SK-N-SH (cell line): ENCODE measurements at regions of chr9 and their contacts with region 1.

Region 1: GRCh38 chr9:86434039-86434726 is 80.0 kb upstream of the TUT7 start:
- DNase-seq: peak; percentile 56
- H3K4me3 ChIP-seq: no peak overlapping the region; a peak in 1 of 4 replicates
- H3K27ac ChIP-seq: no peak overlapping the region
- H3K4me1 ChIP-seq: no peaks in the 10 kb centered on the region
- H3K27me3 ChIP-seq: no peaks in the 10 kb centered on the region
- CTCF ChIP-seq: peak; percentile 92
- EP300 ChIP-seq: no peak
- RAD21 ChIP-seq: peak; percentile 91

Region 2: DNA sequence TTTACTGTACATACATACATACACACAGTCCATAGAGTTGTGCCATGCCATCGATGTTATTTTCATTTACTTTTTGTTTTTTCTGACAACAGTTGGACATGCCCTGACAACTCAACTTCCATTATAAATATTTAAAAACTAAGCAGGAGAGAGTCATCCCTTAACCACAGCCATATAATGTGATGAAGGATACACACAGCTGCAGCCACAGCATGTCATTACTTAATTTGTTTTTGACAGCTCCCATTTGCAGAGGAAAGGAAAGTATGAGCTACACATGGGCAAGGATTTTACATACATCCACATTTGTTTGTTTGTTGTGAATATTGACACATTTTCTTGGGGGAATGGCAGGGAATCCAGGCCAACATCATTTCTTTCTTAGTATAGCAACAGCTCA is 11.5 kb after region 1 on chr9:
- CTCF ChIA-PET with region 1: interaction called, 11 read pairs
- POLR2A ChIA-PET with region 1: no interaction called
- DNase-seq: no peak
- H3K4me3 ChIP-seq: no peak overlapping the region
- H3K27ac ChIP-seq: no peak overlapping the region
- H3K4me1 ChIP-seq: no peaks in the 10 kb centered on the region
- H3K27me3 ChIP-seq: no peaks in the 10 kb centered on the region
- CTCF ChIP-seq: no peak
- EP300 ChIP-seq: no peak
- RAD21 ChIP-seq: no peak

Region 3: DNA sequence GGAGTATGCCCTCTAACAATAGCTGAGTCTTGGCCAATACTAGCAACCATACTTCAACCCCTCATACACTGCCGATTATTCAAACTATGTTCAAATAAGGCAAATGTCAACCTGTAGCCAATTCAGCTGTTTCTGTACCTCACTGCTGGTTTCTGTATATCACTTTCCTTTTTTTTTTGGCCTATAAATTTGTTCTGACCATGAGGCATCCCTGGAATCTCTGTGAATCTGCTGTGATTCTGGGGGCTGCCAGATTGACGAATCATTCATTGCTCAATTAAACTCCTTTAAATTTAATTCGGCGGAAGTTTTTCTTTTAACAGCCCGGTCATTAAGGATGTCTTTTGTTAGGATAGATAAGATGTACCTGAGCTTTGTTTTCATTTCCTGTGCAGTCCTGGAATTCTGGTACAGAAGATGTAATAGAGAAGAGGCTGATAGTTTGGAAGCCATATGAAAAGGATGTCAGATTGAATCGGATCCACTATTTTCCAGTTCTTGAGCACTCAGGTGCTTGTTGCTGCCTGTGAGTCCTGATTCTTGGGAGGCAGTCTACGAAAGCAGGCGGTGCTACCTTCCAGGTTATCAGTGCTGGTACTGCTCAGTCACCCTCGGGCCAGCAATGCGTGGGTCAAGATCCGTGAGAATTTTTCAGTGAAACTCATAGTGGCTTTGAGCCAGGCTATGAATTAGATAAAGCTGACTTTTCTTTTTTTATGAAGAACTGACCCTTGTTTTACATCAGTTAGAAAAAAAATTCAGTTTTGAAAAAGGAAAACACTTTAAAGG is 26.2 kb after region 1 on chr9:
- CTCF ChIA-PET with region 1: interaction called, 19 read pairs
- POLR2A ChIA-PET with region 1: no interaction called
- DNase-seq: no peak
- H3K4me3 ChIP-seq: no peak overlapping the region
- H3K27ac ChIP-seq: no peak overlapping the region
- H3K4me1 ChIP-seq: peaks cover 6 to 17% of the 10 kb centered on the region in 2 experiments; a peak in 3 of 4 replicates
- H3K27me3 ChIP-seq: no peaks in the 10 kb centered on the region
- CTCF ChIP-seq: no peak
- EP300 ChIP-seq: no peak
- RAD21 ChIP-seq: no peak

Region 4: DNA sequence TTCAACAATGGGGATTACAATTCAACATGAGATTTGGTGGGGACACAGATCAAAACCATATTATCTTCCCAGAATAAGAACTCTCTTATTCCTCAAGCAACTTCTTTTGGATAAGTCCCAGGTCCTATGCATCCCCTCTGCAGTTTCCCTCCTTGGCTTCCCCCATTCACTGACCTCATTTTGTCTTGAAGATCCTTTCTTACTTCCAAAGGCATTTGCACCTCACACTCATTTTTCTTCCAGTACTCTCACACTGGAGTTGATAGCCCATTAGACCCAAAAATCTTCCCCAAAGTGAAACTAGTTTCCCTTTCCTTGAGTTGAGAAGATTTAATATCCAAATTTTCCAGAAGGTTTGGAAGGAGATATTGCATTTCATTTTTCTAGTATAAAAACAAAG is 885.5 kb after region 1 on chr9:
- CTCF ChIA-PET with region 1: interaction called, 43 read pairs
- POLR2A ChIA-PET with region 1: no interaction called
- DNase-seq: no peak
- H3K4me3 ChIP-seq: no peak overlapping the region
- H3K27ac ChIP-seq: no peak overlapping the region
- H3K4me1 ChIP-seq: peaks cover 0 to 8% of the 10 kb centered on the region in 2 experiments; a peak in 2 of 4 replicates
- H3K27me3 ChIP-seq: no peaks in the 10 kb centered on the region
- CTCF ChIP-seq: no peak
- EP300 ChIP-seq: no peak
- RAD21 ChIP-seq: no peak

Region 5: GRCh38 chr9:87662808-87663528 is 1228.8 kb after region 1 on chr9:
- CTCF ChIA-PET with region 1: interaction called, 10 read pairs
- POLR2A ChIA-PET with region 1: no interaction called
- DNase-seq: peak; percentile 89
- H3K4me3 ChIP-seq: no peak overlapping the region; a peak in 1 of 4 replicates
- H3K27ac ChIP-seq: no peak overlapping the region
- H3K4me1 ChIP-seq: no peaks in the 10 kb centered on the region; a peak in 2 of 4 replicates
- H3K27me3 ChIP-seq: no peaks in the 10 kb centered on the region
- CTCF ChIP-seq: peak; percentile 70
- EP300 ChIP-seq: no peak
- RAD21 ChIP-seq: peak; percentile 93